ENCODE measurements at regions of chr17 and their contacts with region 1.

Region 1: GRCh38 chr17:10875979-10876555 is 38.2 kb upstream of the PIRT start:
- DNase-seq: peak; percentile 26 to 59
- ATAC-seq: peak; percentile 76

Region 2: DNA sequence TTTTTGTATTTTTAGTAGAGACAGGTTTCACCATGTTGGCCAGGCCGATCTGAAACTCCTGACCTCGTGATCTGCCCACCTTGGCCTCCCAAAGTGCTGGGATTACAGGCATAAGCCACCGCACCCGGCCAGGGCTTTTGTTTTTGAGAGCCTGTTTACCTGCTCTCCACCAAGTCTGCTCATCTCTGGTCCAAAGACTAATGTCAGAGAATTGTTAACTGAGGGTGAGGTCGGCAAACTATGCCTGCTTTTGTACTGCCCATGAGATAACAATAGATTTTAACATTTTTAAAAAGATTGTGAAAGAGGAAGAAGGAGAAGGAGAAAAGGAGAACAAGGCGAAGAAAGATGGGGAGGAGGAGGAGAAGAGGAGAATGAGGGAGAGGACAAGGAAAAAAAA is 98.2 kb before region 1 on chr17:
- intact Hi-C with region 1: no loop called
- DNase-seq: no peak
- ATAC-seq: peak; percentile 22

Region 3: DNA sequence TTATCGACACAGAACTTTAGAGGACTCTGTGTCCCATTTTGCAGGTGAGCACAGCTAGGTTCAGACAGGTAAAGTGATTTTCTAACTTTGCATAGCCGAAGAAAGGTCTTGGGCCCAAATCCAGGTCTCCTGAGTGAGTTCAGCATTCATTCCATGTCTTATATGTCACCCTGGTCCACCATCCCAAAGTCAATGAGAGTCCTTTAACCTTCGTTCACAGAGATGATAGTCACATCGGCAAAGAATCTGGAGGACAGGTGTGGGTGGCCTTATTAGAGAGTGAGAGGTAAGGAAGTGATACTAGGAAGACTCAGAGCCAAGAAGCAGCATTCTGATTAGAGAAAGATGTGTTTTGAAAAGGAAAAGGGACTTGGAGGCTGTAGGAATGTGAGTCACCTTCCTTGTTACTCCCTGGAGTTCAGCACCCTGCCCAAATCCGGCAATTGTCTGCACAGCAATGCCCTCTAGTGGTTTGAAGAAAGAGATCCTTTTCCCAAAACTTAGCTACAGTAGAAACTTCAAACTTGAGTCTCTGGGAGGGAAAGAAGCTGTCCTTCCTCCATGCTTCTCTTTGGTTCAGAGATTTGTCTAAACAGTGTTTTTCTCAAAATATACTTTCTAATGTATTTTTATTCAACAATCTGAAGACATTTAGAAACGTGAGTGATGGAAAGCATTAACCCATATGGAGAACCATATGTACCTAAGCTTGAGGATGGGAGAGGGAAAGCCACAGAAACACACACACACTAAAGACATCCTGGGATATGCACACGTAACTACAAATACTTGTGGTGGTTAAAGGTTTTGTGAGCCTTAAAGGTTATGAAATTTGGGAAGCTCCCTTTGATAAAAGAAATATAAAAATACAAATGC is 268.5 kb after region 1 on chr17:
- intact Hi-C with region 1: loop called in 1 of 2 experiments (anchors 5 kb)
- DNase-seq: peak; percentile 33 to 48
- ATAC-seq: peak; percentile 81

Region 4: GRCh38 chr17:11644261-11645212 is 768.5 kb after region 1 on chr17:
- intact Hi-C with region 1: loop called in 1 of 2 experiments (anchors 10 kb)
- DNase-seq: peak; percentile 65 to 69
- ATAC-seq: peak; percentile 96

Region 5: GRCh38 chr17:11986942-11987329 is 1110.9 kb after region 1 on chr17:
- intact Hi-C with region 1: loop called in 1 of 2 experiments (anchors 10 kb)
- DNase-seq: no peak
- ATAC-seq: no peak